Heart left ventricle (tissue), 16 donors: ENCODE measurements at regions of chr9 and their contacts with region 1.

Region 1: DNA sequence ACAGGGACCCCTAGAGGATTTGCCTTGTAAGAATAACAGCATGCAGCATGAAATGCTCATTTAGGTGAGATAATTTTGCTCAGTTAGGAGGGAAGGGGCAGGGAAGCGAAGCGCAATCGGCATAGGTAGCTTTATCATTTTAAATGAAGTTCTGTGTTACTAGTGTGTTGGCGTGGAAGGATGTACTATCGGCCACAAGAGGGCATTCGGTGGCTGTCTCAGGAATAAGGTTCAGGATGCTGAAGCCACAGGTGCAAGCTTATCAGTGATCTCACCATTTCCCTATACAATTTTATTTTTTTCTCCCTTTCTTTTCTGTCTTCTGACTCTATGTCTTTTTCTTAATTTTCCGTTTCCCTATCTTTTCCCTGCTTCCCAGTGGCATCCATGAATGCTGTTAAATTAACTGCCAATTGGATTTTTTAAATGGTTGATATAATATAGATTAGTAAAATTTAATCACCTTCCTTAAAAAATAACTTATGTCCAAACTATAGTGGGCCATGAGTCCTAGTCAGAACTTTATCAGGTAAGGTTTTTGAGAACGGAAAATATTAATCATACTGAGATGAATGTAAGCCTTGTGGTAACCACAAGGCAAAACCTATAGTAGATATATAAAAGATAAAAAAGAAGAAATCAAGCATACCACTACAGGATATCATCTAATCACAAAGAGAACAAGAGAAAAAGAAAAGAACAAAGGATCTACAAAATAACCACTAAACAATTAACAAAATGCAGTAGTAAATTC is 1.2 kb upstream of the INSL6 start:
- DNase-seq: peak in 3 of 5 donors; percentile 27 to 32 (median 29)
- ATAC-seq: peak in 3 of 4 donors; percentile 70 to 76 (median 70)
- H3K4me3 ChIP-seq: no peak overlapping the region
- H3K27ac ChIP-seq: no peak overlapping the region
- H3K4me1 ChIP-seq: no peaks in the 10 kb centered on the region
- H3K27me3 ChIP-seq: peaks cover 0 to 8% (median 0%) of the 10 kb centered on the region in 9 donors
- CTCF ChIP-seq: peak; percentile 44 to 74 (median 69)
- POLR2A ChIP-seq: no peak

Region 2: GRCh38 chr9:5450359-5451091 is 263.9 kb after region 1 on chr9 and contains the start of gene CD274:
- intact Hi-C with region 1: loop called in 1 of 10 experiments (anchors 5 kb)
- DNase-seq: peak; percentile 90 to 95 (median 94)
- ATAC-seq: peak; percentile 96 to 99 (median 98)
- H3K4me3 ChIP-seq: peak within 1 kb of the TSS; percentile 7 to 83 (median 66)
- H3K27ac ChIP-seq: peak within 1 kb of the TSS; percentile 6 to 97 (median 80)
- H3K4me1 ChIP-seq: peaks cover 0 to 85% (median 21%) of the 10 kb centered on the region in 12 donors
- H3K27me3 ChIP-seq: no peaks in the 10 kb centered on the region
- CTCF ChIP-seq: peak; percentile 53 to 88 (median 66)
- POLR2A ChIP-seq: no peak
- total RNA-seq, gene CD274: 11.6 to 54.4 (median 15.7) TPM

Region 3: DNA sequence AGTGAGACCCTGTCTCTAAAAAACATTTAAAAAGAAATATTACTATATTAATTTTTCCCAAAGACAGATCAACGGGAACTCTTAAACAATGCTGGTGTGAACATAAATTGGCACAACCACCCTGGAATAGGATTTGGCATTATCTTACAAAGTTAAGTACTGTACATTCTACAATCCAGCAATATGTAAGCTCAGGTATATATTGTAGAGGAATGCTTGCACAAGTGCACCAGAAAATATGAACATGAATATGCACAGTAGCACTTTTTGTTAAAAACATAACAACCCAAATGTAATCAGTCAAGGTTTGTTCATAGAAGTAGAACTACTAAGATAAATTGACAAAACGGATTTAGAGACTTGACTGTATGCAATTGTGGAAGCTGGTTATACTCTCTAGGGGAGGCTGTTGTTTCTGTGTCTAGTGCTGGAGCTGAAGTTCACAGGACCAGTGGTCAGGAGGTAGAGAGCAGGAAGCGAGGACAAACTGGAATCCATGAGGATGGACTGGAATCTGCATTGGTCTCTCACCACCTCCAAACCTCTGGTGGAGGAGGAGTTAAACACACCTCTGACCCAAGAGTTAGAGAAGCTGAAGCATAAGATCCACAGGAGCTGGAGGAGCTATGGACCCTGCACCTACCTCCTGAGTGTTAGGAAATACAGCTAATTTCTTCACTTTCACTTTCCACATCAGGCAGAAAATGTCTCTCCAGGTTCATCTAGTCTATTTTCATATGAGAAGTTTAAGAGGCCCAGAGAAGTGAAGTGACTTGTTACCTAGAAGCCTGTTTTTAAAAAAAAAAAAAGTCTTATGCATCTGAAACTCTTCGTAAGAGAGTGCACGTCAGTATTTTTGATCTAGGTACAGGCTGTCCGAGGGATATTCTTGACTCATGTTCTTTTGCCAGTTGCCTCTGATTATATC is 422.0 kb after region 1 on chr9:
- intact Hi-C with region 1: loop called in 2 of 10 experiments (anchors 5 kb)
- DNase-seq: no peak
- ATAC-seq: peak; percentile 82 to 89 (median 86)
- H3K4me3 ChIP-seq: peak overlapping the region in 11 of 12 donors; percentile 23 to 60 (median 45)
- H3K27ac ChIP-seq: peak overlapping the region; percentile 48 to 86 (median 64)
- H3K4me1 ChIP-seq: peaks cover 0 to 23% (median 6%) of the 10 kb centered on the region in 12 donors
- H3K27me3 ChIP-seq: no peaks in the 10 kb centered on the region
- CTCF ChIP-seq: peak in 4 of 12 donors; percentile 7 to 24 (median 20)
- POLR2A ChIP-seq: no peak